IMR-90 (cell line): ENCODE measurements at regions of chr7 and their contacts with region 1.

Region 1: GRCh38 chr7:103065667-103066066 is 8.9 kb downstream of the FBXL13 start:
- DNase-seq: peak; percentile 30
- ATAC-seq: peak; percentile 74
- H3K4me3 ChIP-seq: no peak overlapping the region
- H3K27ac ChIP-seq: no peak overlapping the region
- H3K4me1 ChIP-seq: no peaks in the 10 kb centered on the region
- H3K27me3 ChIP-seq: no peaks in the 10 kb centered on the region
- CTCF ChIP-seq: peak; percentile 51
- POLR2A ChIP-seq: no peak
- RAD21 ChIP-seq: peak; percentile 48

Region 2: GRCh38 chr7:102874166-102874829 is 191.4 kb before region 1 on chr7:
- CTCF ChIA-PET with region 1: interaction called, 3 read pairs
- POLR2A ChIA-PET with region 1: interaction called, 12 read pairs
- dilution Hi-C with region 1: no loop called
- in situ Hi-C with region 1: no loop called
- intact Hi-C with region 1: no loop called
- DNase-seq: peak; percentile 94
- ATAC-seq: peak; percentile 27
- H3K4me3 ChIP-seq: no peak overlapping the region
- H3K27ac ChIP-seq: peak overlapping the region; percentile 80
- H3K4me1 ChIP-seq: peaks cover 28% of the 10 kb centered on the region
- H3K27me3 ChIP-seq: no peaks in the 10 kb centered on the region
- CTCF ChIP-seq: no peak
- POLR2A ChIP-seq: no peak; the same call in 1 of the 2 replicates
- RAD21 ChIP-seq: no peak; the same call in 1 of the 2 replicates

Region 3: GRCh38 chr7:102897856-102898531 is 167.7 kb before region 1 on chr7:
- CTCF ChIA-PET with region 1: interaction called, 5 read pairs
- POLR2A ChIA-PET with region 1: interaction called, 10 read pairs
- dilution Hi-C with region 1: no loop called
- in situ Hi-C with region 1: no loop called
- intact Hi-C with region 1: no loop called
- DNase-seq: no peak
- ATAC-seq: no peak
- H3K4me3 ChIP-seq: no peak overlapping the region
- H3K27ac ChIP-seq: no peak overlapping the region
- H3K4me1 ChIP-seq: peaks cover 4% of the 10 kb centered on the region; the same call in 1 of the 2 replicates
- H3K27me3 ChIP-seq: no peaks in the 10 kb centered on the region
- CTCF ChIP-seq: no peak
- POLR2A ChIP-seq: no peak
- RAD21 ChIP-seq: no peak